GM12878 (cell line): ENCODE measurements at regions of chr9 and their contacts with region 1.

Region 1: DNA sequence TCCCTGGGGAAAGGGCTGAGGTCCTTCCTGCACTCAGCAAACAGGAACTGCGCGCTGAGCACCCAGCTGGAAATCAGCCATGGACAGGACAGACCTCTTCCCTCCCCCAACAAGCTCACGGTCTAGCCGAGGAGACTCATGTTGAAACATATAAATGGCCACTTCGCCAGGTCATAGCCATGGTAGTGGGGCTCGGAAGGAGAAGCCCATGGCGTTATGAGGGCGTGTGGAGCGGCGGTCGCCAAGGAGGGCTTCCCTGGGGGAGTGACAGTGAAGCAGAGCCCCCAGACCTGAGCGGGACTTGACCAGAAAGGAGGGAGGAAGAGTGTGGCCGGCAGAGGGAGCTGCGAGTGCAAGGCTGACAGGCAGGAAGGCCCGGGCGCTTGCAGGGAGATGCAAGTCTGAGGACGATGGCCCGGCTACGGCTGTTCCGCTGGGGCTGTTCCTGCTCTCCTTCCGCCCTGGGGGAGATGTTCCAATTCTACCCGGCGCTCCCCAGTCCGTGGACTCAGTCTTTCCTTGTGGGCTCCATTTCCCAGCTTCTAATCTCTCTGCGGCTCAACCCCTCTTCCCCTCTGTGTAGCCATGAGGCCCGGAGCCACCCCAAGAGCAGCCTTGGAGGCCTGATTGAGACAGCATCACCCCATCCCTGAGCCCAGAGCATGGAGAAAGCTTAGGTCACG is 43.9 kb upstream of the PRRC2B start:
- DNase-seq: no peak
- ATAC-seq: peak; percentile 100
- H3K4me3 ChIP-seq: no peak overlapping the region
- H3K27ac ChIP-seq: no peak overlapping the region
- H3K4me1 ChIP-seq: no peaks in the 10 kb centered on the region
- H3K27me3 ChIP-seq: no peaks in the 10 kb centered on the region
- CTCF ChIP-seq: peak; percentile 85 to 91 (median 88)
- EP300 ChIP-seq: no peak
- POLR2A ChIP-seq: no peak
- RAD21 ChIP-seq: peak; percentile 87

Region 2: DNA sequence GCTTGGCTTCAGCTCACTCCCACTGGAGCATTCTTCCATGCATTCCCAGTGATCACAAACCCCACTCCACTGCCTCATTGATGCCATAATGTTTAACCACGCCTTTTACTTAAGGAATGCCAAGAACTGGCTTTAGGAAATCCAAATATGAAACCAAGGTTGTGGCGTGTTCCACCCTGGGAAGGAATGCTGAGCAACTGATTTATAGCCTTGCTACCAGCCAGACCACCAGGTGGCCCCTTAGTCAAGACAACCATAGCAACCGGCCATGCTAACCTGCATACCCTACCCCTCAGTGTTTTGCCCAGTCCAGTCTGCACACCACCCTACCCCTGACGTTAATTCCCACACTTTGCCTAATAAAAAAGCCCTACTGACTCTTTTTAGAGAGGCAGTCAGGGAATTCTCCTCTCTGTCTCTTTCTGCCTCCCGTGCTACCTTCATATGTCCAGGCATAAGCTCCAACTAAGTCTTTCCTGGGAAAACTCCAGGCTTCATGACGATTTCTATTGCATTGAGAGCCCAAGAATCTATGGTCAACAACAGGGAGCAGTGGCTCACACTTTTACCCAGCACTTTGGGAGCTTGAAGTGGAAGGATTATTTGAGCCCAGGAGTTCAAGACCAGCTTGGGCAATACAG is 16.9 kb after region 1 on chr9:
- CTCF ChIA-PET with region 1: interaction called, 12 read pairs
- POLR2A ChIA-PET with region 1: no interaction called
- RAD21 ChIA-PET with region 1: no interaction called
- SMC1A ChIA-PET with region 1: no interaction called
- in situ Hi-C with region 1: no loop called
- intact Hi-C with region 1: no loop called
- DNase-seq: no peak
- ATAC-seq: peak; percentile 64
- H3K4me3 ChIP-seq: no peak overlapping the region
- H3K27ac ChIP-seq: no peak overlapping the region
- H3K4me1 ChIP-seq: no peaks in the 10 kb centered on the region
- H3K27me3 ChIP-seq: no peaks in the 10 kb centered on the region
- CTCF ChIP-seq: peak; percentile 6 to 50 (median 36); a peak in 3 of 6 replicates
- EP300 ChIP-seq: no peak
- POLR2A ChIP-seq: no peak
- RAD21 ChIP-seq: peak; percentile 40; the same call in 1 of the 2 replicates

Region 3: DNA sequence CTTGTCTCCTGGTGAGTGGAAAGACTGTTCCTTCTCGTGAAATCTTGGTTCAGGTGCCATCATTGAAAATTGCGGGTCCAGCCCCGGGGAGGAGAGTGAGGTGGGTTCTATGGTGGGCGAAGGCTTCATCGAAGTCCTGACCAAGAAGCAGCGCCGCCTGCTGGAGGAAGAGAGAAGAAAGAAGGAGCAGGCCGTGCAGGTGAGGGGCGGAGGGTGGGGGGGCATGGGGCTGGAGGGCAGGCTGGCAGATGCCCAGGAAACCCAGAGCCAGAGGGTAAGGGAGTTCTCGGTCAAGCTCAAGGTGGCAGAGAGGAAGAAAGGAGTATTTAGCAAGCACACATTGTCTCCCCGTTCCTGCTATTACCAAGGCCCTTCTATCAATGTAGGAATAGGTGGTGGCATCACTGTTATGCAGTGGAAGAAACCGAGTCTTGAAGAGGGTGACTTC is 128.4 kb after region 1 on chr9:
- CTCF ChIA-PET with region 1: interaction called, 26 read pairs
- POLR2A ChIA-PET with region 1: no interaction called
- RAD21 ChIA-PET with region 1: interaction called, 3 read pairs
- SMC1A ChIA-PET with region 1: interaction called, 6 read pairs
- in situ Hi-C with region 1: no loop called
- intact Hi-C with region 1: loop called (anchors 1 kb)
- DNase-seq: no peak
- ATAC-seq: peak; percentile 76
- H3K4me3 ChIP-seq: no peak overlapping the region
- H3K27ac ChIP-seq: no peak overlapping the region
- H3K4me1 ChIP-seq: no peaks in the 10 kb centered on the region
- H3K27me3 ChIP-seq: no peaks in the 10 kb centered on the region
- CTCF ChIP-seq: peak; percentile 36 to 72 (median 56)
- EP300 ChIP-seq: no peak
- POLR2A ChIP-seq: no peak
- RAD21 ChIP-seq: peak; percentile 44

Region 4: GRCh38 chr9:131747356-131747755 is 397.3 kb after region 1 on chr9:
- CTCF ChIA-PET with region 1: interaction called, 26 read pairs
- POLR2A ChIA-PET with region 1: no interaction called
- RAD21 ChIA-PET with region 1: interaction called, 4 read pairs
- SMC1A ChIA-PET with region 1: interaction called, 5 read pairs
- in situ Hi-C with region 1: loop called (anchors 5 kb)
- intact Hi-C with region 1: loop called (anchors 1 kb)
- DNase-seq: no peak
- ATAC-seq: peak; percentile 81
- H3K4me3 ChIP-seq: no peak overlapping the region
- H3K27ac ChIP-seq: no peak overlapping the region
- H3K4me1 ChIP-seq: peaks cover 15% of the 10 kb centered on the region
- H3K27me3 ChIP-seq: no peaks in the 10 kb centered on the region
- CTCF ChIP-seq: peak; percentile 66 to 77 (median 67)
- EP300 ChIP-seq: no peak
- POLR2A ChIP-seq: no peak
- RAD21 ChIP-seq: peak; percentile 85